ENCODE measurements at regions of chr1 and their contacts with region 1.

Region 1: GRCh38 chr1:40531381-40532061 is at the start of gene ZNF684:
- DNase-seq: peak; percentile 91
- ATAC-seq: peak; percentile 98
- H3K4me3 ChIP-seq: peak within 1 kb of the TSS; percentile 50 to 94 (median 80)
- H3K4me3 Mint-ChIP-seq: peak within 1 kb of the TSS; percentile 100
- H3K27ac ChIP-seq: peak within 1 kb of the TSS; percentile 60 to 92
- H3K27ac Mint-ChIP-seq: peak within 1 kb of the TSS; percentile 96
- H3K4me1 ChIP-seq: peaks cover 19 to 22% of the 10 kb centered on the region in 2 donors
- H3K4me1 Mint-ChIP-seq: peaks cover 26% of the 10 kb centered on the region
- H3K27me3 ChIP-seq: peaks cover 0 to 3% (median 1%) of the 10 kb centered on the region in 4 experiments
- H3K27me3 Mint-ChIP-seq: peaks cover 5% of the 10 kb centered on the region
- CTCF ChIP-seq: no peak
- total RNA-seq, gene ZNF684: 6.3 and 7.4 TPM in 2 replicates

Region 2: GRCh38 chr1:40257688-40258444 is 273.7 kb before region 1 on chr1 and contains the start of gene ZMPSTE24:
- CTCF ChIA-PET with region 1: no interaction called
- POLR2A ChIA-PET with region 1: no interaction called
- intact Hi-C with region 1: loop called (anchors 1 kb)
- DNase-seq: peak; percentile 98
- ATAC-seq: peak; percentile 94
- H3K4me3 ChIP-seq: peak within 1 kb of the TSS; percentile 80 to 98 (median 96)
- H3K4me3 Mint-ChIP-seq: peak within 1 kb of the TSS; percentile 97
- H3K27ac ChIP-seq: peak within 1 kb of the TSS; percentile 99
- H3K27ac Mint-ChIP-seq: peak within 1 kb of the TSS; percentile 99
- H3K4me1 ChIP-seq: peaks cover 9 to 10% of the 10 kb centered on the region in 2 donors
- H3K4me1 Mint-ChIP-seq: peaks cover 32% of the 10 kb centered on the region
- H3K27me3 ChIP-seq: no peaks in the 10 kb centered on the region
- H3K27me3 Mint-ChIP-seq: no peaks in the 10 kb centered on the region
- CTCF ChIP-seq: no peak
- total RNA-seq, gene ZMPSTE24: 14.0 and 18.5 TPM in 2 replicates

Region 3: GRCh38 chr1:40449684-40450494 is 81.6 kb before region 1 on chr1 and contains the start of gene ZFP69B:
- CTCF ChIA-PET with region 1: interaction called, 16 read pairs
- POLR2A ChIA-PET with region 1: interaction called, 4 read pairs
- intact Hi-C with region 1: loop called (anchors 1 kb)
- DNase-seq: peak; percentile 92
- ATAC-seq: peak; percentile 81
- H3K4me3 ChIP-seq: peak within 1 kb of the TSS; percentile 62 to 79 (median 76)
- H3K4me3 Mint-ChIP-seq: peak within 1 kb of the TSS; percentile 96
- H3K27ac ChIP-seq: peak within 1 kb of the TSS in 1 of 2 donors; percentile 60
- H3K27ac Mint-ChIP-seq: peak within 1 kb of the TSS; percentile 93
- H3K4me1 ChIP-seq: peaks cover 14 to 17% of the 10 kb centered on the region in 2 donors
- H3K4me1 Mint-ChIP-seq: peaks cover 27% of the 10 kb centered on the region
- H3K27me3 ChIP-seq: no peaks in the 10 kb centered on the region
- H3K27me3 Mint-ChIP-seq: no peaks in the 10 kb centered on the region
- CTCF ChIP-seq: no peak
- total RNA-seq, gene ZFP69B: 10.8 and 11.8 TPM in 2 replicates

Region 4: GRCh38 chr1:40508375-40509341 is 22.9 kb before region 1 on chr1 and contains the start of gene EXO5:
- CTCF ChIA-PET with region 1: interaction called, 16 read pairs
- POLR2A ChIA-PET with region 1: no interaction called
- intact Hi-C with region 1: loop called (anchors 1 kb)
- DNase-seq: peak; percentile 83
- ATAC-seq: peak; percentile 98
- H3K4me3 ChIP-seq: peak within 1 kb of the TSS; percentile 68 to 94 (median 88)
- H3K4me3 Mint-ChIP-seq: peak within 1 kb of the TSS; percentile 93
- H3K27ac ChIP-seq: peak within 1 kb of the TSS; percentile 52 to 53
- H3K27ac Mint-ChIP-seq: peak within 1 kb of the TSS; percentile 85
- H3K4me1 ChIP-seq: peaks cover 6 to 16% of the 10 kb centered on the region in 2 donors
- H3K4me1 Mint-ChIP-seq: peaks cover 20% of the 10 kb centered on the region
- H3K27me3 ChIP-seq: no peaks in the 10 kb centered on the region
- H3K27me3 Mint-ChIP-seq: no peaks in the 10 kb centered on the region
- CTCF ChIP-seq: no peak
- total RNA-seq, gene EXO5: 13.9 and 16.9 TPM in 2 replicates

Region 5: DNA sequence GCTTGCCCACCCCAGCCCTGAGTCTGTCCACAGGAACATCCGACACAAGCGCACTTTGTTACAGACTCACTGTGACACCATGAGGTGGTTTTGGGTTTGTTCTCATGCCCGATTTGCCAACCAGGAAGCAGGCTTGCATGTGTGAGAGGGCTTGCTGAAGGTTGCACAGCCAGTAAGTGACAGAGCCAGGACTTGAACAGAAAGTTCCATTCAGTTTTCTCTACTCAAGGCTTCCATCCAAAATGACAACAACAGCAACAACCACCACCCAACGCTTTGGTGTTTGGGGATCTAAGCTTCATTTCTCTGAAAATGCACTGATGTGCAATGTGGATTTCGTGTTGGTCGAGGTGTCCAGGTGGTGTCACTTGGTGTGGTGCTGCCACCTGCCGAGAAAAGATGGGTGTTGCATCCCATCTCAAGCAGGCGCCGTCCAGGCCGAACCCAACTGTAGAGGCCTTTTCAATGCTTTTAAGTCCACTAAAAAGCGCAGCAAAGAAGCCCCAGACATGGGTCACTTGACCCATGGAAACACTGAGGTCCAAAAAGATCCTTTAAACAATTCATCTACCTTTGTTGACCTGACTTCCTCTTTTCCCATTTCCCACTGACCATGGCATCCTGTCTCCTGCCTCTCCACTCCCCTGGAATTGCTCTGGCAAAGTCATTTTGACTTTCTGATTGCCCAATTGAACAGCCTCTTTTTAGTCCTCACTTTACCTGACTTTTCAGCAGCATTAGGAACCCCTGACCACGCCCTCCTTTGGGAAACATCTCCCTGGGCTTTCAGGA is 318.5 kb after region 1 on chr1:
- CTCF ChIA-PET with region 1: interaction called, 8 read pairs
- POLR2A ChIA-PET with region 1: no interaction called
- intact Hi-C with region 1: loop called (anchors 10 kb)
- DNase-seq: peak; percentile 85
- ATAC-seq: peak; percentile 98
- H3K4me3 ChIP-seq: no peak overlapping the region
- H3K4me3 Mint-ChIP-seq: peak overlapping the region; percentile 35
- H3K27ac ChIP-seq: no peak overlapping the region
- H3K27ac Mint-ChIP-seq: no peak overlapping the region
- H3K4me1 ChIP-seq: peaks cover 8% of the 10 kb centered on the region in 2 donors
- H3K4me1 Mint-ChIP-seq: peaks cover 11% of the 10 kb centered on the region
- H3K27me3 ChIP-seq: no peaks in the 10 kb centered on the region
- H3K27me3 Mint-ChIP-seq: peaks cover 5% of the 10 kb centered on the region
- CTCF ChIP-seq: peak; percentile 98

Measured in B cell (primary cell).